ENCODE measurements at regions of chr2 and their contacts with region 1.

Region 1: GRCh38 chr2:191501561-191502168 is 176.3 kb upstream of the NABP1 start:
- DNase-seq: no peak

Region 2: GRCh38 chr2:190929919-190930318 is 571.7 kb before region 1 on chr2:
- intact Hi-C with region 1: no loop called
- DNase-seq: no peak

Region 3: DNA sequence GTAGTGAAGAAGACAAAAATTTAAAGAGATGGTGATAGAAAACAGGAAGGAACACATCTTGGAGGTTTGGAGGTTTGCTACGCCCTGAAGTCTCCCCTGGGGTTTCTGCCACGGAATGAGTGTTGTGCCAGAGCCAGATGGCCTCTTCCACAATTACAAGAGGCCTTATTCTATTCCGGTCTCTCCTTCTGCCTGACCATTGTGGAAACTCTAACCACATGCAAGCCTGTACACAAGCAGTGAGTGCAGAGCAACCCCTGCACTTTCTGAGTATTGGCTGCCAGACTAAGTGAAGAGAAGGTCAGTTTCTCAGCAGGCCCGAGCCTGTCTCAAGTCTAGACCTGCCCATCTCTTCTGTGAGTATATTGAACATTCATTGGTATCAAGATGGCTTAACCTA is 279.2 kb before region 1 on chr2:
- intact Hi-C with region 1: loop called (anchors 10 kb)
- DNase-seq: no peak